Caco-2 (cell line): ENCODE measurements at regions of chr22 and their contacts with region 1.

Region 1: GRCh38 chr22:32354360-32355351 is 3.0 kb upstream of the RFPL3 start:
- DNase-seq: no peak
- H3K4me3 ChIP-seq: no peak overlapping the region
- H3K4me3 Mint-ChIP-seq: peak overlapping the region; percentile 57
- H3K27ac Mint-ChIP-seq: peak overlapping the region; percentile 53
- H3K4me1 ChIP-seq: no peaks in the 10 kb centered on the region
- H3K4me1 Mint-ChIP-seq: no peaks in the 10 kb centered on the region
- H3K27me3 ChIP-seq: no peaks in the 10 kb centered on the region
- H3K27me3 Mint-ChIP-seq: no peaks in the 10 kb centered on the region
- CTCF ChIP-seq: no peak

Region 2: DNA sequence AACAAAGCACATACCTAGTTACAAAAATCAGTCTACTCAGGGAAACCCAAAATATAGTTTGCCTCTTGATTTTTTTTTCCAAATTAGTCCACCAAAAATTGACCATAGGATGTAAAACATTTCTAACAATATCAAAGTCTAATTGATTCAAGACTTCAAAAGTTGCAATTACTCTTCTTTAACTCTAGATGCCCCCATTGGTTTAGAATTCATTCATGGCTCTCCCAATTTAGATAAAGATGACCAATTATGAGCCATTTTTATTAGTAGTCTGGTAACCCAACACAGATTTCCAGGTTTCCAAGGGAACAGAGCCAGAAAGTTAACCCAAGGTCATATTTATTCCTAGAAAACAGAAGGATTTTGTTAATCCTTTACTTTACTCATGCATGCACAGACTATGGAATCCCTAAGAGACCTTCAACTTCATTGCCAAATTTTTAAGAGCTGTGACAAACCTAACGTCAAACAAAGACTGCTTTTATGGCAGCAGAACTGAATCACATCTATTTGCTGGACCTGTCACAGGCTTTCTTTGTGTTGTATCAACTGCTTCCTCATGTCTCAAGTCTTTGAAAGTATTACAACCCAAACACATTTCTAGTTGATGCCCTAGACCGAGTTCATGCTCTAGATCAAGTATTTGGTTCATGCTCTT is 250.9 kb before region 1 on chr22:
- CTCF ChIA-PET with region 1: no interaction called
- POLR2A ChIA-PET with region 1: no interaction called
- intact Hi-C with region 1: loop called (anchors 5 kb)
- DNase-seq: no peak
- H3K4me3 ChIP-seq: no peak overlapping the region
- H3K4me3 Mint-ChIP-seq: no peak overlapping the region
- H3K27ac Mint-ChIP-seq: no peak overlapping the region
- H3K4me1 ChIP-seq: no peaks in the 10 kb centered on the region
- H3K4me1 Mint-ChIP-seq: no peaks in the 10 kb centered on the region
- H3K27me3 ChIP-seq: no peaks in the 10 kb centered on the region
- H3K27me3 Mint-ChIP-seq: peaks cover 10% of the 10 kb centered on the region
- CTCF ChIP-seq: peak; percentile 18 to 26

Region 3: DNA sequence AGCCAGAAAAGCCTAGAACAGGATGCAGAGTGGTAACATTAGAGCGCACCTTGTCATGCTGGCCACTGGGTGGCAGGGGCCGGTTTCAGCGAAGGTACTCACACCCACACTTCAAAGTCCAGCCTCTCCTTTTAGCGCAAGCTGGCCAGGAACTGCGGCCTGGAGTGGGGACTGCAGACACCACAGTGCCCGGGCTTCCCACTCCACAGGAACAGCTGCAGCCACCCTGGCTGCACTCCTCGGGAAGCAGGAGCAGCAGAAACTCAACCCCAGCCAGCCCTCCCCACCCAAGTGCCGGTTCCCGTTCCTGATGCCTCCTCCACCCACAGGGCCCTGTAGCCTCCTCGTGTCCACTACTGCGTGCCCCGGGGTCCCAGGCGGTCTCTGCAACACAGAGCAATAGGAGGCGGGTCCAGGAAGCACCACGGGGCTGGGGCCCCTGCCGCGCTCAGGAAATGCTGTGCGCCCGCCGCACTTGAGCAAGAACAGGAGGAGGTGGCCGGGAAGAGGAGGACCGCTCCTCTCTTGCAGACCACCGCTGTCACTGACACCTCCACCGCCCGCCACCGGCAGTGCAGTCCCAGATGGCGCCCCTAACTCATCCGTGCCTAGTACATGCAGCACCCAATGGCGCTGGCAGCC is 152.0 kb before region 1 on chr22:
- CTCF ChIA-PET with region 1: interaction called, 3 read pairs
- POLR2A ChIA-PET with region 1: no interaction called
- intact Hi-C with region 1: loop called (anchors 1 kb)
- DNase-seq: peak; percentile 77 to 80
- H3K4me3 ChIP-seq: 0 out of 2 replicates have a peak overlapping the region, but pooled peaks have one; percentile 3
- H3K4me3 Mint-ChIP-seq: no peak overlapping the region
- H3K27ac Mint-ChIP-seq: no peak overlapping the region
- H3K4me1 ChIP-seq: no peaks in the 10 kb centered on the region
- H3K4me1 Mint-ChIP-seq: peaks cover 10% of the 10 kb centered on the region
- H3K27me3 ChIP-seq: no peaks in the 10 kb centered on the region
- H3K27me3 Mint-ChIP-seq: no peaks in the 10 kb centered on the region
- CTCF ChIP-seq: peak; percentile 66 to 83